ENCODE measurements at regions of chr7 and their contacts with region 1.

Region 1: GRCh38 chr7:87152107-87152844 is at the start of gene DMTF1:
- DNase-seq: peak; percentile 92 to 99 (median 94)
- ATAC-seq: peak; percentile 88
- H3K4me3 ChIP-seq: peak within 1 kb of the TSS; percentile 85
- H3K27ac ChIP-seq: peak within 1 kb of the TSS; percentile 98
- H3K4me1 ChIP-seq: peaks cover 3 to 24% of the 10 kb centered on the region in 2 experiments; a peak in 2 of 5 replicates
- H3K27me3 ChIP-seq: no peaks in the 10 kb centered on the region
- CTCF ChIP-seq: 0 out of 6 replicates have a peak, but pooled peaks of 2 of the 3 experiments have one; percentile 0 to 14
- EP300 ChIP-seq: peak; percentile 69
- POLR2A ChIP-seq: peak; percentile 96
- RAD21 ChIP-seq: no peak
- polyA plus RNA-seq, gene DMTF1: 25.7 to 52.4 TPM

Region 2: DNA sequence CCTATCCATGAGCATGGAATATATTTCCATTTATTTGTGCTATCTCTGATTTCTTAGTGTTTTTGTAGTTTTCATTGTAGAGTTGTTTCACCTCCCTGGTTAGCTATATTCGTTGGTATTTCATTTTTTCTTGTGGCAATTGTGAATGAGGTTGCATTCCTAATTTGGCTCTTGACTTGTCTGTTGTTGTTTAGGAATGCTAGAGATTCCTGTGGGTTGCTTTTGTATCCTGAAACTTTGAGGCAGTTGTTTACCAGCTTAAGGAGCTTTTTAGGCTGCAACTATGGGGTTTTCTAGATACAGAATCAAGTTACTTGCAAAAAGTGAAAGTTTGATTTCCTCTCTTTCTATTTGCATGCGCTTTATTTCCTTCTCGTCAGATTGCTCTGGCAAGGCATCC is 813.2 kb before region 1 on chr7:
- CTCF ChIA-PET with region 1: no interaction called
- POLR2A ChIA-PET with region 1: no interaction called
- in situ Hi-C with region 1: no loop called
- intact Hi-C with region 1: no loop called
- DNase-seq: no peak
- ATAC-seq: no peak
- H3K4me3 ChIP-seq: no peak overlapping the region
- H3K27ac ChIP-seq: no peak overlapping the region
- H3K4me1 ChIP-seq: no peaks in the 10 kb centered on the region
- H3K27me3 ChIP-seq: no peaks in the 10 kb centered on the region
- CTCF ChIP-seq: no peak
- EP300 ChIP-seq: no peak
- POLR2A ChIP-seq: no peak
- RAD21 ChIP-seq: no peak

Region 3: GRCh38 chr7:86926732-86927131 is 225.5 kb before region 1 on chr7:
- CTCF ChIA-PET with region 1: interaction called, 52 read pairs
- POLR2A ChIA-PET with region 1: interaction called, 4 read pairs
- in situ Hi-C with region 1: no loop called
- intact Hi-C with region 1: loop called (anchors 1 kb)
- DNase-seq: peak; percentile 61 to 73 (median 68)
- ATAC-seq: peak; percentile 87
- H3K4me3 ChIP-seq: no peak overlapping the region
- H3K27ac ChIP-seq: no peak overlapping the region
- H3K4me1 ChIP-seq: no peaks in the 10 kb centered on the region
- H3K27me3 ChIP-seq: no peaks in the 10 kb centered on the region
- CTCF ChIP-seq: peak; percentile 61 to 87 (median 77)
- EP300 ChIP-seq: no peak
- POLR2A ChIP-seq: no peak
- RAD21 ChIP-seq: peak; percentile 73 to 79

Region 4: DNA sequence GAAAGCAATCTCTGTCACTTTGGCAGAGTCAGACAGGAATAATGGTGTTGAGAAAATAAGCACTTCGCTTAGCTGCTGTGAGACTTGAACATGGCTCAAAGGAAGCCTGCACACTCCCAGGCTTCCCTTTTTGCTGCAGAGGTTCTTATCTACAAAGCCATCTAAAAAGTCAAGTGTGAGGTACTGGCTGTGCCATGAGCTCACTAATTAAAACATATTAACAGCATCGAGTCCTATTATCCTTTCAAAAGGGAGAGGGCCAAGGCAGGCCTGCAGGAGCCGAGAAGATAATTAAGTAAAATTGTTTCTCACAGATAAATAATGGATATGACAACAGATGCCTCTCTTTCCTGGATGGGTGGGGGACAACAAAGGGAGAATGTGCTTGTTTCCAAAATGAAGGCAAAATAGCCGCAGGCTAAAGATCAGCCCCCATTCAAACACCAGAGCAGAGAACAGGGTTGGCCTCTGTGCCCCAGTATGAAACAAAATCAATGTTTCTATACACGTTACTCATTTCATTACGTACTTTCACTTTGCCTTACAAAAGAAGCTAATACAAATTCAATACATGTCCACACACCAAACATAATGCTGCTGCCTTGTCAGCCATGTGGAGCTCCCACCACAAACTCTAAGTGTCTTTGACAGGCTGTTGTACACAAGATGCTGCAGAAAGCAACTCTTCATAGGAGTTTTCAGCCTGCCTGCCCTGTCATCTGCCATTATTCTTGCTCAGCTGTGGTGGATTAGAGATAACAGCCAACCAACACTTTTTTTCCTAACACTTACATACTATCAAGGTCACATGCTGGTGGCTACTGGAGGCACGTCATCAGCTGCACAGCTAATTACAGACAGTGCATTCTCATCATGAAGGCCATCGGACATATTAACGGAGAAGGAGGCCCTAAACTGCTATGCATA is 148.1 kb before region 1 on chr7:
- CTCF ChIA-PET with region 1: no interaction called
- POLR2A ChIA-PET with region 1: interaction called, 8 read pairs
- in situ Hi-C with region 1: no loop called
- intact Hi-C with region 1: loop called (anchors 5 kb)
- DNase-seq: peak in 3 of 4 experiments; percentile 41 to 86 (median 65)
- ATAC-seq: peak; percentile 91
- H3K4me3 ChIP-seq: peak overlapping the region; percentile 10; the same call in 1 of the 2 replicates
- H3K27ac ChIP-seq: peak overlapping the region; percentile 66; the same call in 2 of the 3 replicates
- H3K4me1 ChIP-seq: peaks cover 0 to 25% of the 10 kb centered on the region in 2 experiments; a peak in 3 of 5 replicates
- H3K27me3 ChIP-seq: no peaks in the 10 kb centered on the region
- CTCF ChIP-seq: no peak
- EP300 ChIP-seq: peak; percentile 35; the same call in 1 of the 2 replicates
- POLR2A ChIP-seq: no peak
- RAD21 ChIP-seq: no peak

Region 5: DNA sequence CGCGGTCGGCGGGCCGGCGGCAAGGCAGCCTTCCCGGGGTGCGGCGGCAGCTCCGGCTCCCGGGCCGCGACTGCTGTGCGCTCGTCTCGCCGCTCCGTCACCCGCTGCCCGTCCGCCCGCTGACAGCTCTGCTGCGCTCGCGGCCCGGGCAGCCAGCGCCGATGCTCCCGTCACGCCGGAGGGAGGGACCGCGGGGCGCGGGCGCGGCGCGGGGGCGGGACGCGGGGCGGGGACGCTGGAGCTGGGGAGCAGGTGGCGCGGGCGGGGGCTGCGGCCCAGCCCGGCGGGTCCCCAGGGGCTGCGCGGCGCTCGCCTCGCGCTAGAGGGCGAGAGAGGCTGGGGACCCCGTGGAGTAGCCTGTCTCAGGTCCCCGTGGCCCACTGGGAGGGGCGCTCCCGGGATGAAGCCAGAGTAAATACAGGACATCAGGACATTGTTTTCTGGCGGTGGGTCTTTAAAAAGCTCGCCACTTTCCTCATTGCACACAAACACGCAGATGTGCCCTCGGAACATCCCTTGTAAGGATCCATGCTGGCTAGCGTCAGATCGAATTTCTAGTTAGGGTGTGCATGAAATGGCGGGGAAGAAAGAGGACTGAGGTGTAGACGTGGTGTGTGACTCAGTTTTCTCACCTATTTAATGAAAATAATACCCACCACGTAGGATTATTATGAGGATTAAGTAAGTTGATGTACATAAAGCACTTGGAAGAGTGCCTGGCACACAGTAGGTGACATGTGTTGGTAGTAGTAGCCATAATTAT is 92.6 kb before region 1 on chr7 and contains the start of gene ELAPOR2:
- CTCF ChIA-PET with region 1: interaction called, 26 read pairs
- POLR2A ChIA-PET with region 1: interaction called, 8 read pairs
- in situ Hi-C with region 1: no loop called
- intact Hi-C with region 1: no loop called
- DNase-seq: peak; percentile 96 to 97 (median 97)
- ATAC-seq: peak; percentile 99
- H3K4me3 ChIP-seq: peak within 1 kb of the TSS; percentile 73
- H3K27ac ChIP-seq: peak within 1 kb of the TSS; percentile 79
- H3K4me1 ChIP-seq: peaks cover 9 to 31% of the 10 kb centered on the region in 2 experiments
- H3K27me3 ChIP-seq: no peaks in the 10 kb centered on the region
- CTCF ChIP-seq: peak; percentile 79 to 94 (median 91)
- EP300 ChIP-seq: no peak; the same call in 1 of the 2 replicates
- POLR2A ChIP-seq: peak; percentile 72
- RAD21 ChIP-seq: peak; percentile 87 to 92
- polyA plus RNA-seq, gene ELAPOR2: 9.2 to 17.3 TPM

Region 6: DNA sequence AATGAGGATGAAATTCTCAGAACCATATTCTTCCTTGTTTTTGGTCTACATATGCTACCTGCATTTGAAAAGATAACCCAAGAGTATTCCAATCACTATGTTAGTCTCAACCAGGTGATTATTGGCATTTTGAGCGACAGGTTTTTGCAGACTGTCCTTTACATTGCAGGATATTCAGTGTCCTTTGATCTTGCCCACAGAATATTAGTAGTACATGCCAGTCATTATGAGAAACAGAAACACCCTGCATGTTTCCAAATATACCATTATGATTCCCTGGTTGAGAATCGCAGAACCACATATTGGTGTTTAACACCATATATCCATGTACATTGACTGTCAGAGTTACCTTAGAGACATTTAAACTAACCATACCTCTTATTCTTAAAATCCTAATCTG is 36.7 kb after region 1 on chr7:
- CTCF ChIA-PET with region 1: no interaction called
- POLR2A ChIA-PET with region 1: interaction called, 16 read pairs
- in situ Hi-C with region 1: no loop called
- intact Hi-C with region 1: no loop called
- DNase-seq: no peak
- ATAC-seq: no peak
- H3K4me3 ChIP-seq: no peak overlapping the region
- H3K27ac ChIP-seq: no peak overlapping the region
- H3K4me1 ChIP-seq: no peaks in the 10 kb centered on the region
- H3K27me3 ChIP-seq: no peaks in the 10 kb centered on the region
- CTCF ChIP-seq: no peak
- EP300 ChIP-seq: no peak
- POLR2A ChIP-seq: no peak
- RAD21 ChIP-seq: no peak

Region 7: DNA sequence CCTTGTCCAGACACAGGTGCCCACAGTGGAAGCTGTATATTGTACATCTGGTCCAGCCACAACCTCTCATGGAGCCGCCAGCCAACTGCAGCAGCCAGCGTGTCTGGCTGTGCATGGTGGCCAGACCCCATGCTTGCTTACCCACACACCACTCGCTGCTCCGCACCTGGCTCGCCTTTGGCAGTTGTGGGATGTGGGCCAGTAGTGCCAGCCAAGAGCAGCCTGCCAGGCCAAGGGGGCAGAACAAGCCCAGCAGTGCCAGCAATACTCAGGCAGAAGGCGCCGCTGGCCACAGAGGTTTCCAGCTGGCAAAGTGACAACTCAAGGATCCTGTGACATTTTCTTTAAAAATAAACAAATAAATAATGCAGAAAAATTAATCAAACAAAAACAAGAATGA is 79.0 kb after region 1 on chr7:
- CTCF ChIA-PET with region 1: no interaction called
- POLR2A ChIA-PET with region 1: interaction called, 5 read pairs
- in situ Hi-C with region 1: no loop called
- intact Hi-C with region 1: loop called (anchors 2 kb)
- DNase-seq: no peak
- ATAC-seq: no peak; the same call in 2 of the 3 replicates
- H3K4me3 ChIP-seq: no peak overlapping the region
- H3K27ac ChIP-seq: no peak overlapping the region
- H3K4me1 ChIP-seq: no peaks in the 10 kb centered on the region
- H3K27me3 ChIP-seq: peaks cover 12 to 17% of the 10 kb centered on the region in 2 experiments; a peak in 4 of 5 replicates
- CTCF ChIP-seq: no peak
- EP300 ChIP-seq: no peak
- POLR2A ChIP-seq: no peak
- RAD21 ChIP-seq: no peak

Region 8: GRCh38 chr7:87810130-87810529 is 657.9 kb after region 1 on chr7:
- CTCF ChIA-PET with region 1: no interaction called
- POLR2A ChIA-PET with region 1: no interaction called
- in situ Hi-C with region 1: no loop called
- intact Hi-C with region 1: no loop called
- DNase-seq: no peak
- ATAC-seq: no peak
- H3K4me3 ChIP-seq: no peak overlapping the region
- H3K27ac ChIP-seq: no peak overlapping the region
- H3K4me1 ChIP-seq: no peaks in the 10 kb centered on the region
- H3K27me3 ChIP-seq: peaks cover 0 to 9% of the 10 kb centered on the region in 2 experiments; a peak in 2 of 5 replicates
- CTCF ChIP-seq: no peak
- EP300 ChIP-seq: no peak
- POLR2A ChIP-seq: no peak
- RAD21 ChIP-seq: no peak

Region 9: GRCh38 chr7:87876040-87876868 is 724.0 kb after region 1 on chr7 and contains the starts of genes DBF4 and SLC25A40:
- CTCF ChIA-PET with region 1: no interaction called
- POLR2A ChIA-PET with region 1: no interaction called
- in situ Hi-C with region 1: no loop called
- intact Hi-C with region 1: loop called (anchors 10 kb)
- DNase-seq: peak; percentile 92 to 98 (median 93)
- ATAC-seq: peak; percentile 86
- H3K4me3 ChIP-seq: peak within 1 kb of the TSS; percentile 86
- H3K27ac ChIP-seq: peak within 1 kb of the TSS; percentile 92
- H3K4me1 ChIP-seq: peaks cover 10% of the 10 kb centered on the region in 2 experiments; a peak in 4 of 5 replicates
- H3K27me3 ChIP-seq: no peaks in the 10 kb centered on the region
- CTCF ChIP-seq: no peak
- EP300 ChIP-seq: peak; percentile 57; the same call in 1 of the 2 replicates
- POLR2A ChIP-seq: peak; percentile 92
- RAD21 ChIP-seq: no peak
- polyA plus RNA-seq, gene DBF4: 38.4 to 43.5 TPM
- polyA plus RNA-seq, gene SLC25A40: 19.0 to 25.1 TPM